ENCODE measurements at regions of chr7 and their contacts with region 1.

Region 1: GRCh38 chr7:116525913-116526861 is 1.4 kb downstream of the CAV1 start:
- DNase-seq: peak; percentile 85 to 91
- ATAC-seq: peak; percentile 92
- H3K4me3 ChIP-seq: peak overlapping the region; percentile 21 to 84
- H3K27ac ChIP-seq: peak overlapping the region; percentile 87 to 90
- H3K4me1 ChIP-seq: no peaks in the 10 kb centered on the region
- H3K27me3 ChIP-seq: no peaks in the 10 kb centered on the region

Region 2: DNA sequence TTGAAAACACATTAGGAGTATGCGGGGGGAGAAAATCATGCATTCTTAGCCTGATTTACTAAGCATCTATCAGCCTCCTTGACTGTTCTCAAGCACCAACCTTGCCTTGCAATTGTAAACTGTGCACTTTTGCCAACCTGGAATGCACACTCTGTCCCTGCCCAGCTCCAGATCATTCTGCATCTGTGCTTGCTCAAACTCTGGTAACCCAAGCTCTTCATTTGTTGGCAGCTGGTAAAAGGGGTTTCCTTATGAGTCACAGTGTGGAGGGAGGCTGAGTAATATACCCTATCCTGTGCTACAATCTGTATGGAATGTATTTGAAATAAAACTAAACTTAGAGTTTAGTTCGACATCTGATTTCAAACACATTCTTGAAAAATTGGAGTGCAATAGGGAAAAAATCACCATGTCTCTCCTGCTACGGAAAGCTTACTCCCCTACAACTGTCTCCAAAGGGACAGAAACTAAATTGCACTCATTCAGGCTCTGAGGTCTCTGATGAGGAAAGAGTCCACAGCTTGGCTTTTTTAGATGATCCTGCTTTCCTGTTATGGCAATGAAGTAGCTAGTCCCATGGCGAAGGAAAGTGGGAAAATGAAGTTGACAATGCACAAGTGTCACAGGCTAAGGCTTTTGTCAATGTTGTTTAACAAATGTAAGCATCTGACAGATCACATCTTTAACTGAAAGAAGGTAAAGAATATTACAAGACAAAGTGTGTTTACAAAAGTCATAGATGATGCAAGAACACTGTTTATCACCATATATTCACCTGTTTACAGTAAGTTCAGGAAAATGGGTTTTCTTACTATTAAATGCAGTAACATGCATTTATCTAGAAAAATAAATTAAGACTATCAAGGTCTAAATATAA is 254.0 kb before region 1 on chr7:
- intact Hi-C with region 1: loop called in 1 of 2 experiments (anchors 5 kb)
- DNase-seq: peak in 1 of 2 donors; percentile 50
- ATAC-seq: peak; percentile 90
- H3K4me3 ChIP-seq: no peak overlapping the region
- H3K27ac ChIP-seq: peak overlapping the region; percentile 76 to 97
- H3K4me1 ChIP-seq: peaks cover 3 to 14% of the 10 kb centered on the region in 2 donors
- H3K27me3 ChIP-seq: no peaks in the 10 kb centered on the region

Region 3: GRCh38 chr7:116290740-116291139 is 235.4 kb before region 1 on chr7:
- intact Hi-C with region 1: no loop called
- DNase-seq: no peak
- ATAC-seq: no peak
- H3K4me3 ChIP-seq: no peak overlapping the region
- H3K27ac ChIP-seq: no peak overlapping the region
- H3K4me1 ChIP-seq: no peaks in the 10 kb centered on the region
- H3K27me3 ChIP-seq: no peaks in the 10 kb centered on the region

Region 4: GRCh38 chr7:116443101-116443523 is 83.1 kb before region 1 on chr7:
- intact Hi-C with region 1: loop called in 1 of 2 experiments (anchors 5 kb)
- DNase-seq: no peak
- ATAC-seq: peak; percentile 27
- H3K4me3 ChIP-seq: no peak overlapping the region
- H3K27ac ChIP-seq: no peak overlapping the region
- H3K4me1 ChIP-seq: peaks cover 1 to 12% of the 10 kb centered on the region in 2 donors
- H3K27me3 ChIP-seq: no peaks in the 10 kb centered on the region

Region 5: GRCh38 chr7:116582806-116583444 is 56.7 kb after region 1 on chr7:
- intact Hi-C with region 1: loop called (anchors 2 to 5 kb)
- DNase-seq: no peak
- ATAC-seq: peak; percentile 75
- H3K4me3 ChIP-seq: no peak overlapping the region
- H3K27ac ChIP-seq: peak overlapping the region; percentile 58 to 80
- H3K4me1 ChIP-seq: peaks cover 0 to 3% of the 10 kb centered on the region in 2 donors
- H3K27me3 ChIP-seq: no peaks in the 10 kb centered on the region